K562 (cell line): ENCODE measurements at regions of chr10 and their contacts with region 1.

Region 1: GRCh38 chr10:79472951-79473350 is 27.5 kb upstream of the ZCCHC24 start:
- DNase-seq: no peak
- ATAC-seq: no peak
- H3K4me3 ChIP-seq: no peak overlapping the region
- H3K27ac ChIP-seq: no peak overlapping the region
- H3K4me1 ChIP-seq: peaks cover 5 to 14% of the 10 kb centered on the region in 2 experiments; a peak in 3 of 5 replicates
- H3K27me3 ChIP-seq: no peaks in the 10 kb centered on the region; a peak in 1 of 5 replicates
- CTCF ChIP-seq: no peak
- EP300 ChIP-seq: no peak
- POLR2A ChIP-seq: no peak
- RAD21 ChIP-seq: no peak

Region 2: GRCh38 chr10:79358783-79359182 is 114.2 kb before region 1 on chr10:
- CTCF ChIA-PET with region 1: no interaction called
- POLR2A ChIA-PET with region 1: no interaction called
- in situ Hi-C with region 1: no loop called
- intact Hi-C with region 1: no loop called
- DNase-seq: peak in 1 of 4 experiments; percentile 9
- ATAC-seq: no peak
- H3K4me3 ChIP-seq: no peak overlapping the region
- H3K27ac ChIP-seq: no peak overlapping the region
- H3K4me1 ChIP-seq: no peaks in the 10 kb centered on the region; a peak in 1 of 5 replicates
- H3K27me3 ChIP-seq: no peaks in the 10 kb centered on the region
- CTCF ChIP-seq: no peak
- EP300 ChIP-seq: no peak
- POLR2A ChIP-seq: no peak
- RAD21 ChIP-seq: no peak

Region 3: DNA sequence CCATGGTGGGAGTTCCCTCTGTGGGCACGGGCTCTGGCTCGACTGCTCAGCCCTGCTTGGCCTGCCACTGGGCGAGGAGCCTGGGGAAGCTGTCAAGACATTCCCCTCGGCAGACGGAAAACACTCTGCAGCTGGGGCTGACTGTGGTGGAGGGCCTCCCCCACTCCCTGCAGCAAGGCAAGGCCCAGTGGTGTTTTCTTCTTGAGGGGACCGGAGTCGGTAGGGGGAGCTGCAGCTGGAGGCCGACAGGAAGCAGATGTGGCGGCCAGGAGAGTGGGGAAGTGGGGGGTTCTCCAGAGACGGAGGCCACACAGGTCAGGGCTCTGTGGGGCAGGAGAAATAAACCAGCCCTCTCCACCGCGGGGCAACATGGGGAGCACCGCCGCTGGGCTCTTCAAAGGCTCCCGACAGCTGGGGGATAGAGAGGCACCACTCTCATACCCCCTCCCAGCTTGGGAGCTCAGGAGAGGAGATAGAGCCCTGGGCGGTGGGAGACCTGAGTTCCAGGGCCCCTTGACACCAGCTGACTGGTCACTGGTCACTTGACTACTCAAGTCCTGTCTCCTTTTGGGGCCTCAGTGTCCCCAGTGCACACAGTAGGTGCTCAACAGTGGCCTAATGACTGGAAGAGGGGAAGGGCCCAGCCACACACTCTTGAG is 82.3 kb before region 1 on chr10:
- CTCF ChIA-PET with region 1: interaction called, 5 read pairs
- POLR2A ChIA-PET with region 1: interaction called, 4 read pairs
- in situ Hi-C with region 1: loop called (anchors 5 kb)
- intact Hi-C with region 1: no loop called
- DNase-seq: peak; percentile 86 to 91 (median 88)
- ATAC-seq: peak; percentile 83
- H3K4me3 ChIP-seq: peak overlapping the region; percentile 9
- H3K27ac ChIP-seq: peak overlapping the region; percentile 83
- H3K4me1 ChIP-seq: peaks cover 47 to 61% of the 10 kb centered on the region in 2 experiments
- H3K27me3 ChIP-seq: no peaks in the 10 kb centered on the region
- CTCF ChIP-seq: peak; percentile 83 to 86 (median 84)
- EP300 ChIP-seq: no peak
- POLR2A ChIP-seq: peak; percentile 70
- RAD21 ChIP-seq: peak; percentile 39 to 61